Activated naive CD8-positive, alpha-beta T cell treated with anti-CD3 and anti-CD28 coated beads, Interleukin-2, amount 10 ng/mL, durations not matched to agents 7 days and 5 days (primary cell): ENCODE measurements at regions of chr17 and their contacts with region 1.

Region 1: DNA sequence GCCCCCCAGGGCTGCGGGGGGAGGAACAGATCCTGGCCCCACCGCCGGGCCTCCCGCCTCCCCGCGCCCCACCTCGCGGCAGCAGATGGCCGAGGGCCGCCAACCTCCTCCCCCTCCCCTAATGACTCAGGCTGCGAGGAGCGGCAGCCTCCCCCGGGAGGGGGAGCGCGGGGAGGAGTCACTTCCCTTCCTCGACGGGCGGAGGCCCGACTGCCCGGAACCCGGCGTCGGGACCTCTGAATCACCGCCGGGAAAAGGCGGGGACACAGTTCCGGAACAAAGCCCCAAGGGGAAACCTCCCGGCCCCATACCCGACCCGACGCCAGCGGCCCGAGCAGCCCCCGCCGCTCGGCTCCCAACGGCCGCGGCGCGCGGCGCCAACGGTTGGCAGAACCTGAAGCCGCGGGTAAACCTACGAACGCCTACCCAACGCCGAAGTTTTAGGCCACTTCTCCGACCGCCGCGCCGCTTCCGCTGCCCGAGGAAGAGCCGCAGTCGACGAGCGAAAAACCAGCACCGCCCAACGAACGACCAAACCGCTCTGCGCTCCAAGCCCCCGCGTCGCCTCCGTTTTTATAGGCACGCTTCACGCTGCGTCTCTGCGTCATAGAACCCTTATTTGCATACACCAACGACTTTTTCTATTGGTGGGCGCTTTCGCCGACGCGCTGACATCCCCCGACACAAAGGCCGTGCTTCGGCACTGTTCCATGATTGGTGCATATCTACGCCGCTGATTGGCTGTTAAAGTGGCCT is 5.2 kb upstream of the UNK start:
- DNase-seq: peak; percentile 93
- ATAC-seq: peak; percentile 76
- H3K4me3 Mint-ChIP-seq: peak overlapping the region; percentile 99
- H3K27ac Mint-ChIP-seq: peak overlapping the region; percentile 99
- H3K4me1 Mint-ChIP-seq: peaks cover 42% of the 10 kb centered on the region
- H3K27me3 Mint-ChIP-seq: no peaks in the 10 kb centered on the region

Region 2: GRCh38 chr17:75764711-75765421 is 14.5 kb before region 1 on chr17 and contains the start of gene GALK1:
- POLR2A ChIA-PET with region 1: interaction called, 129 read pairs
- DNase-seq: peak; percentile 83
- ATAC-seq: peak; percentile 97
- H3K4me3 Mint-ChIP-seq: peak within 1 kb of the TSS; percentile 87
- H3K27ac Mint-ChIP-seq: peak within 1 kb of the TSS; percentile 77
- H3K4me1 Mint-ChIP-seq: peaks cover 8% of the 10 kb centered on the region
- H3K27me3 Mint-ChIP-seq: peaks cover 3% of the 10 kb centered on the region
- total RNA-seq, gene GALK1: 50.4 to 53.0 TPM

Region 3: GRCh38 chr17:75827252-75828115 is 48.1 kb after region 1 on chr17:
- POLR2A ChIA-PET with region 1: interaction called, 121 read pairs
- DNase-seq: peak; percentile 77
- ATAC-seq: peak; percentile 41
- H3K4me3 Mint-ChIP-seq: peak overlapping the region; percentile 61
- H3K27ac Mint-ChIP-seq: peak overlapping the region; percentile 94
- H3K4me1 Mint-ChIP-seq: peaks cover 13% of the 10 kb centered on the region
- H3K27me3 Mint-ChIP-seq: no peaks in the 10 kb centered on the region

Region 4: GRCh38 chr17:75877752-75878173 is 98.4 kb after region 1 on chr17:
- POLR2A ChIA-PET with region 1: interaction called, 46 read pairs
- DNase-seq: peak; percentile 84
- ATAC-seq: peak; percentile 70
- H3K4me3 Mint-ChIP-seq: peak overlapping the region; percentile 91
- H3K27ac Mint-ChIP-seq: peak overlapping the region; percentile 93
- H3K4me1 Mint-ChIP-seq: peaks cover 28% of the 10 kb centered on the region
- H3K27me3 Mint-ChIP-seq: peaks cover 12% of the 10 kb centered on the region

Region 5: DNA sequence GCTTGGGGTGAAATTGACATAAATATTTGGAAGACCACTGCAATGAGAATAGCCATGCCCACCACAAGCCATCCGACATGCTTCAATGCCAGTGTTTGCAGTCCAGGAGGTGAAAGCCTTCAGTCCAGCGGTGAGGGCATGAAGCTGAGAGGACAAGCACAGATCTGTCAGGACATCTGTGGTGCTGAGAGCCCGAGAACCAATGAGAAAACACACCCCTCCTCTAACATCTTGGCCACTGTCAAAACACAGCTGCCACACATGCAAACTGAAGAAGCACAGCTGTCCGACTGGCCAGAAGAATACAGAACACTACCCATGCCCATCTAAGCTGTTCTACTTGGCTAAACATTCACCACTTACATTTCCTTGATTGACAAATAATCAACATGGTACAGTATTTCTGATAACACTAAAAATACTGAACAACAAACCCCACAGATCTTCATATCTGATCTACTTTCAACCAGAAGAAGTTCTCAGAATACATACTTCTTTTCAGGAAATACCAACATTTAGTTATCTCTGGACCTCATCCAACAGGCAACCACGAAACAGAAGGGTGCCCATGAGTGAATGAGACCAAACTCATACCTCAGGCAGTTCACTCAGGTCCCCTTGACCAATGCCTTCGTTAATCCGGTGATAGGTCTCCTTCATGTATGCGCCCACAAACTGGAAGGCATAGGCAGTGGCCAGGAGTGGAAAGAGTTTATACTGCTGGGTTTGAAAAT is 171.6 kb after region 1 on chr17:
- POLR2A ChIA-PET with region 1: no interaction called
- DNase-seq: no peak
- ATAC-seq: peak; percentile 65
- H3K4me3 Mint-ChIP-seq: peak overlapping the region; percentile 40
- H3K27ac Mint-ChIP-seq: peak overlapping the region; percentile 83
- H3K4me1 Mint-ChIP-seq: peaks cover 13% of the 10 kb centered on the region
- H3K27me3 Mint-ChIP-seq: no peaks in the 10 kb centered on the region

Region 6: DNA sequence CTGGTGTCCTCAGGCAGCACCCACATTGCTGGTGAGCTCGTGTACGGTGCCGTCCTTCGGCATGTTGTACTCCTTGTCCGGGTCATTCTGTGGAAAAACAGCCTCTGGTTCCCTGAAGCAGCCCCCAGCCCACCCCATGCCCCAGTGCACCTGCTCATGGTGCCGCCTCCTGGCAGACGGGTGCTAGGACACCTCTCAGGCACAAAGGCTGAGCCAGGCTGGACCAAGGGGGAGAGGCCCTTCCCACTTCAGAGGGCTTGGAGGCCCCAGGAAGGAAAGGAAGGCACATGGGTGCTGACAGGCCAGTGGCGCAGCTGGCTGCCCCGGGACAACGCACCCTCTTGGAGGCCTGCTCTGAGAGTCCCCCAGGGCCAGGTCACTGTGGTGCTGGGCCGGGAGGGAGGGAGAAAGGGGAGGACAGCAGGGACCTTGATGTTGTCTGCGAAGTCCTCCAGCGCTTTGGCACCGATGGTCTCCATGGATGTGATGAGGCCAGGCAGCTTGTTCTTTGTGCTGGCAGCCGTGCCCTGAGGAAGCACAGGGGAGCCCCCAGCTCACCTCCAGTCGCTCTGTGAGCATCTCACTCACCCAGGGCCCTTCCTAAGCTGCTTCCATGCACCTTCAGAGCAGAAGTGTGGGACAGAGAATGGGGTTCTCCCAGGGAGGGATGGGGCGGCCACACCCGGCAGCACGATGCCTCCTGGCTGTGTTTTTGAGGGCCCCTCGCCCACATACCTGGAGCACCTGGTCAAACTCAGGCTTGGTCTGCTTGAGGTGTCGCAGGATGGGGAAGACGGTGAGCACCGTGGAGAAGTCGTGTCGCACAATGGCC is 308.8 kb after region 1 on chr17:
- POLR2A ChIA-PET with region 1: no interaction called
- DNase-seq: no peak
- ATAC-seq: no peak
- H3K4me3 Mint-ChIP-seq: no peak overlapping the region
- H3K27ac Mint-ChIP-seq: no peak overlapping the region
- H3K4me1 Mint-ChIP-seq: no peaks in the 10 kb centered on the region
- H3K27me3 Mint-ChIP-seq: no peaks in the 10 kb centered on the region